Dorsolateral prefrontal cortex (tissue), 120 donors: ENCODE measurements at regions of chr2 and their contacts with region 1.

Region 1: GRCh38 chr2:213806125-213806726 is 522.0 kb downstream of the SPAG16 start:
- DNase-seq: no peak
- H3K4me3 ChIP-seq: no peak overlapping the region
- H3K27ac ChIP-seq: no peak overlapping the region
- H3K27me3 ChIP-seq: no peaks in the 10 kb centered on the region
- CTCF ChIP-seq: peak; percentile 36 to 81 (median 62)

Region 2: DNA sequence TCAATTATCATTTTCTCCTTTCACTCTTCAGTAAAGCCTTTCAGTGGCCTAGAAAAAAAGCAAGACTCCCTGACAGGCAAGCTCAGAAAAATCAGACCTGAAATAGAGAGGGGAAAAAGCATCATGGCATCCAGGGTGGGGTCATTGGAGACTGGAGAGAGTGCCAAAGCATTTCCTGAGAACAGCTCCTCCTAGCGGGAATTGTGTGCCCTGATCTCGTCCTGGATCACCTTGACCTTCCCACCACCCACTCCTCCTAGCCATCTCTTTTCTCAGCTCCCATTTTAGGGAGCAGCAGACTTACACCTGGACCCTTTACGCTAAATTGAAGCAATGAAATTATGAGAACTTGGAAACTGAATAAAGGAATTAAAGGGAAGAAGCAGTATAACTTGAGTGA is 781.2 kb after region 1 on chr2:
- intact Hi-C with region 1: loop called in 1 of 2 experiments (anchors 5 kb)
- DNase-seq: no peak
- H3K4me3 ChIP-seq: no peak overlapping the region
- H3K27ac ChIP-seq: no peak overlapping the region
- H3K27me3 ChIP-seq: no peaks in the 10 kb centered on the region
- CTCF ChIP-seq: no peak